ENCODE measurements at regions of chr1 and their contacts with region 1.

Region 1: DNA sequence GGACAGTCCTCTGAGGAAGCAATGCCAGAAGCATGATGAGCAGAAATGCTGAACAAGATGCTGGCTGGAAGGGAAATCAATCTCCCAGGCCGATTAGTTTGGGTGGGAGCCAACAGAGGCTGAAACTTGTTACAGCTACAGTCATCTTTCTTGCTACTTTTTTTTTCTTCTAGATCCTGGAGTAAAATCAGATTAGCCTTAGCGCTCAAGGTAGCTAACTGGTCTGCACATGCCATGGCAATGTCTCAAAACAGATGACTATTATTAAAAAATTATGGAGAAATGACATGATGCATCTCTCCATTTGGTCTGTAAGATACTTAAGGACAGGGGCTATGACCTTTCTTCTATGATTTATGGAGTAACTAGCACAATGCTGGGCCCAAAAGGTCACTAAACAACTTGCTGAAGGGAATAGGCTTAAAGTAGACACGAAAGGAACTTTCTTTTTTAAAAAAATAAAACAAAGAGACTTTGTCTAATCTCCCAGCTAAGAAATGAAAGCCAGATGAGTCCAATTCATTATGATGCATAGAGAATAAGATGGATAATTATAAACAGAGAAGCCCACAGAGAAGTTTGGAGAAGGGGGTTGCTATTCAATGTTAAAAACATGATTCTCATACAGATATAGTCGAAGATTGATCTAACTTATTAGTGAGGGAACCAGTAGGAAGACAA is 42.5 kb downstream of the UTP25 start:
- DNase-seq: no peak
- H3K4me3 Mint-ChIP-seq: no peak overlapping the region
- H3K27ac Mint-ChIP-seq: peak overlapping the region; percentile 98
- H3K4me1 Mint-ChIP-seq: peaks cover 65% of the 10 kb centered on the region
- H3K27me3 Mint-ChIP-seq: no peaks in the 10 kb centered on the region
- CTCF ChIP-seq: no peak

Region 2: GRCh38 chr1:209850342-209850979 is 19.8 kb before region 1 on chr1:
- CTCF ChIA-PET with region 1: interaction called, 201 read pairs
- POLR2A ChIA-PET with region 1: interaction called, 14 read pairs
- intact Hi-C with region 1: no loop called
- DNase-seq: peak; percentile 80
- H3K4me3 Mint-ChIP-seq: no peak overlapping the region
- H3K27ac Mint-ChIP-seq: peak overlapping the region; percentile 47
- H3K4me1 Mint-ChIP-seq: peaks cover 26% of the 10 kb centered on the region
- H3K27me3 Mint-ChIP-seq: no peaks in the 10 kb centered on the region
- CTCF ChIP-seq: peak; percentile 92

Region 3: GRCh38 chr1:209899948-209900347 is 29.7 kb after region 1 on chr1:
- CTCF ChIA-PET with region 1: interaction called, 16 read pairs
- POLR2A ChIA-PET with region 1: interaction called, 35 read pairs
- intact Hi-C with region 1: loop called (anchors 1 kb)
- DNase-seq: peak; percentile 54
- H3K4me3 Mint-ChIP-seq: no peak overlapping the region
- H3K27ac Mint-ChIP-seq: peak overlapping the region; percentile 70
- H3K4me1 Mint-ChIP-seq: peaks cover 45% of the 10 kb centered on the region
- H3K27me3 Mint-ChIP-seq: no peaks in the 10 kb centered on the region
- CTCF ChIP-seq: peak; percentile 36